Dendritic cell treated with granulocyte-macrophage colony-stimulating factor and Interleukin-4, amounts not matched to agents 40 ng/mL and 50 ng/mL, for 4 days (primary cell): ENCODE measurements at regions of chr9 and their contacts with region 1.

Region 1: DNA sequence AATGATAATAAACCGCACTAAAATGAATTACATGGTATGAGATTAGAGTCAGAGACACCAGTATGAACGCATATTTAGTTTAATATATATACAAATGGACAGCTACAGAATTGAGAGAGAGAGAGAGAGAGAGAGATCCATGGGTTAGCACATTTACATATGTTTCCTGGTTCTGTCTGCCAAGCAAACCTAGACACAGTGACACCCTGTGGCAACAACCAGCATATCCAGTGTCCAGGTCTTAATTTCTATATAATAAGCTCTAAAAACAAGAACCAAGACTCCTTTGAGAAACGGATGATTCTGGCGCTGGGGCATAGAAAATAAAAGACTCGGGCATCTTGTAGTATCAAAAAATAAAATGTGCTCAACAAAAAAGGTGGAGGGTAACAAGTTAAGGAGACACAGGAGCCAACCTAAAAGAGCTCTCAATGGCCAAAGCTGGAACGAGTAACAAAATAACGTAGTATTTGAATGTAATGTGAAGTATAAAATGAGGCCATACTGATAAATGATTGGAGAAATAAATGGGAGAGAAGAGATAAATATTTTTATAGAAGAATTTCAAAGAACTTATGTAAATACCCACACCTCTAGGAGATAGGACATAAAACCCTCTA is 84.5 kb downstream of the RFX3 start:
- H3K4me3 Mint-ChIP-seq: no peak overlapping the region
- H3K27ac Mint-ChIP-seq: no peak overlapping the region
- H3K4me1 Mint-ChIP-seq: peaks cover 6% of the 10 kb centered on the region
- H3K27me3 Mint-ChIP-seq: no peaks in the 10 kb centered on the region

Region 2: GRCh38 chr9:2857564-2858198 is 583.6 kb before region 1 on chr9:
- intact Hi-C with region 1: loop called (anchors 2 kb)
- H3K4me3 Mint-ChIP-seq: no peak overlapping the region
- H3K27ac Mint-ChIP-seq: no peak overlapping the region
- H3K4me1 Mint-ChIP-seq: peaks cover 10% of the 10 kb centered on the region
- H3K27me3 Mint-ChIP-seq: peaks cover 24% of the 10 kb centered on the region

Region 3: DNA sequence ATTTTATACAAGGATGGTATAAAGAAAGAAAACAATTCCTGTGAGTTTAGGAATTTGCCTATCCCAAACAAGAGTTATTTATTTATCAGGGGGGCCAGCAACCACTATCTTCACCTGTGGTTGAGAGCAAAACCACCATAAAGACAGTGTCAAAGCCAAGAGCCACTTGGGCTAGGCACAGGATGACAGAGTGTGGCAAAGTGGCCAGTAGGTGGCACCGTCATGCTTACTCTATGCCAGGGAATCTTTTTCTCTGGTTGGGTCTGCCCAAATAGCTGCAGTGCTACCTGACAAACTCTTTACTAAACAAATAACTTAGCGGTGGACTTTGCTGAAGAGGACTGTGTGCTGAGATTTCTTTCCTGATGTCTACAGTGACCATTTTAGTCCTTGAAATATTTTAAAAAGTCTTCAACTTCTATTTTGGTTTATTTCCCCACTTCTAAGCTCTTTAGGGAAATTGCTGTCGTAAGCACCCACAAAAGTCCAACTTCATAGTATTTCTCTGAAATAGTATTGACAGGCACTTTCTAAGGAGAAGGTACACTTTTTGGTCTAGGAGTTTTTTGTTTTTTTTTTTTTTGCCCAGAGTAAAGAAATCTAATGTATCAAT is 200.5 kb before region 1 on chr9:
- intact Hi-C with region 1: loop called (anchors 1 kb)
- H3K4me3 Mint-ChIP-seq: no peak overlapping the region
- H3K27ac Mint-ChIP-seq: no peak overlapping the region
- H3K4me1 Mint-ChIP-seq: peaks cover 33% of the 10 kb centered on the region
- H3K27me3 Mint-ChIP-seq: no peaks in the 10 kb centered on the region

Region 4: GRCh38 chr9:3331817-3332216 is 109.5 kb before region 1 on chr9:
- intact Hi-C with region 1: loop called (anchors 5 kb)
- H3K4me3 Mint-ChIP-seq: no peak overlapping the region
- H3K27ac Mint-ChIP-seq: no peak overlapping the region
- H3K4me1 Mint-ChIP-seq: no peaks in the 10 kb centered on the region
- H3K27me3 Mint-ChIP-seq: no peaks in the 10 kb centered on the region

Region 5: DNA sequence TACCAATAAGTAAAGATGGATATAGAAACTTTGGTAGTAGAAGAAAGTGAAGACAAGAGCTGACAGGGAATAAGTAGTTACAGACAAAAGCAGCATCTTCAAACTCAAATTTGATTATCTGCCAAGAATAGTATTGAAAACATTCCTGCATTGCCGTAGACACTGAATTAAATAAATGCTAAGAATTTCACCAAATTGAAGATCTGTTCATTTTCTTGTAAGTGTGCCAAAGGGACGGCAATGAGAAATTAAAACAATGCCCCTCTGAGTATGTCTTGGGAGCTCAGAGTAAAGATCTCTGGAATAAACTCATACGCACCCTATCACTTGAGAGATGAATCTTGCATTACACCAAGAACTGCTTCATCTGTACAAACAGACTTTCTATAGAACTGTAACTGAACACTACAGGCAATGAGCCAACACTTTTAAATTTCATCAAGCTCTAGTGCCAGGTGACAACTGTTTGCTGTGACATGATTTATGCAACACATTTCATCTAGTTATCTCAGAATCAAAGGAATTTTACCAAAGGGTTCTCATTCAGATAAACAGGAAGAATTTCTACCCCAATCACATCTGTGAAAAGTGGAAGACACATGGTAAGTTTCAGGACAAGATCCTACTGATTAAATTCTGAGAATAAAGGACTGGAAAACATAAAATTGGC is 17.6 kb after region 1 on chr9:
- intact Hi-C with region 1: no loop called
- H3K4me3 Mint-ChIP-seq: no peak overlapping the region
- H3K27ac Mint-ChIP-seq: no peak overlapping the region
- H3K4me1 Mint-ChIP-seq: peaks cover 7% of the 10 kb centered on the region
- H3K27me3 Mint-ChIP-seq: no peaks in the 10 kb centered on the region